Breast epithelium (tissue), 4 donors: ENCODE measurements at regions of chr10 and their contacts with region 1.

Region 1: DNA sequence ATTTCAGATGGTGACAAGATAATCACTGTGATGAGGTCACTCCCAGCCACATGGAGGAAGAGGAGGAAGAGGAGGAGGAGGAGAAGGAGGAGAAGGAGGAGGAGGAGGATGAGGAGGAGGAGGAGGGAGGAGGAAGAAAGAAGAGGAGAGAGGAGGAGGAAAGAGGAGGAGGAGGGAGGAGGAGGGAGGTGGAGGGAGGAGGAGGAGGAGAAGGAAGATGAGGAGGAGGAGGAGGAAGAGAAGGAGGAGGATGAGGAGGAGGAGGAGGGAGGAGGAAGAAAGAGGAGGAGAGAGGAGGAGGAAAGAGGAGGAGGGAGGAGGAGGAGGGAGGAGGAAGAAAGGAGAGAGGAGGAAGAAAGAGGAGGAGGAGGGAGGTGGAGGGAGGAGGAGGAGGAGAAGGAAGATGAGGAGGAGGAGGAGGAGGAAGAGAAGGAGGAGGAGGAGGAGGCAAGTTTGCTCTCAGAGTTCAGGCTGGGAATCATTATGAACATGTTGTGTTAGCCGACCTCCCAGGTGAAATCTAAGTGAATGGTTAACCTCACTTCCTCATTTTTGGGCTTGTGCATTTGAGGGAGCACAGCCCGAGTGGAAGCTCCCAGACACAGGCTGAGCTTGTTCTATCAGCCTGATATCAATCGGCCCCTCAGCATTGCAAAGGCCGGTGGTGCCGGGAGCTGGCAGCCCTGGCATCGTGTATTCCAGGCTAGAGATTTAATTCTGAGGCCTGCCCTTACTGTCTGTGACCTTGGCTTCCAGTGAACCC is 236.2 kb upstream of the PITRM1 start:
- DNase-seq: no peak
- H3K4me3 ChIP-seq: no peak overlapping the region
- H3K27ac ChIP-seq: no peak overlapping the region
- H3K4me1 ChIP-seq: no peaks in the 10 kb centered on the region
- H3K27me3 ChIP-seq: no peaks in the 10 kb centered on the region
- CTCF ChIP-seq: no peak
- POLR2A ChIP-seq: no peak

Region 2: DNA sequence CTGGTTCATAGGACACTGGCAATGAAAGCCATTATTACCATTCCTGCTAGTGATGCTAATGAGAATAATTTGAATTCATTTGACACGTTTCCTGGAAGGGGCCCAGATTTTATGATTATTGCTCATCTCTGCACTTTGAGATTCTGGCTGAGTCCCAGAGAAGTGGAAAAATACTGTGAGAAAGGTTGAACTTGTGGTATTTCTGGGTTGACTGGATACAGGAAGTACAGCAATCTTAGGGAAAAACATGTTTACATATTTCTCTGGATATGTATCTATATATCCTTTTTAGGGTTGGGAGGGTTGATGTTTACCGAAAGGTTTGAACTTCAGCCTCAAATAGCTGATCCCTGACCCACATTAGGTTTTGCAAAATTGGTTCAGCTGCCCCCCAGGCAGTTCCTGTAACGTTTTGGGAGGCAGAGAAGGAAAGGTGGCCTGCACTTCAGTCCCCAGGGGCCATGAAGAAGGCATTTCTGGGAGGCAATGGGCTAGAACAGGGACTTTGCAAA is 17.5 kb after region 1 on chr10:
- intact Hi-C with region 1: no loop called
- DNase-seq: no peak
- H3K4me3 ChIP-seq: no peak overlapping the region
- H3K27ac ChIP-seq: peak overlapping the region; percentile 44 to 85
- H3K4me1 ChIP-seq: peaks cover 0 to 5% of the 10 kb centered on the region in 2 donors
- H3K27me3 ChIP-seq: no peaks in the 10 kb centered on the region
- CTCF ChIP-seq: no peak
- POLR2A ChIP-seq: no peak

Region 3: DNA sequence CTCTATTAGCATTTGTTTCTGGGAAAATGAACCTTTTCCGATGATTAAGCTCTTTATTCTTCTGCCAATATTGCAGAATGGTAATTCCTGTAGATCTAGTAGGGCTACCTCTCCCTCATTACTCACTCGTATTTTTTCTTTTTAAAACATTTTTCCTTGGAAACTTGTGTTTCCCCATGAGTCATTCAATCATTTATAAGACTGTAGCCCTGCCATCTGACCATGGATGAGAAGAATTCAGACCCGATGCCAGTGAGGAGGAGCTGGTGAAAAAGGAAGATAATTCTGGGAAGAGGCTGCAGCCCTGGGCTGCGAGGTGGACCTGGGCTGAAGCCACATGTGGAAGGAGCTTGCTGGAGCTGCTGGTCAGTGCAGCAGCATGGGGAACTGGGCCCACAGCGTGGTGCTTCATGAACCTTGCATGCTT is 133.4 kb after region 1 on chr10:
- intact Hi-C with region 1: no loop called
- DNase-seq: no peak
- H3K4me3 ChIP-seq: no peak overlapping the region
- H3K27ac ChIP-seq: peak overlapping the region in 1 of 2 donors; percentile 55
- H3K4me1 ChIP-seq: no peaks in the 10 kb centered on the region
- H3K27me3 ChIP-seq: no peaks in the 10 kb centered on the region
- CTCF ChIP-seq: no peak
- POLR2A ChIP-seq: no peak

Region 4: DNA sequence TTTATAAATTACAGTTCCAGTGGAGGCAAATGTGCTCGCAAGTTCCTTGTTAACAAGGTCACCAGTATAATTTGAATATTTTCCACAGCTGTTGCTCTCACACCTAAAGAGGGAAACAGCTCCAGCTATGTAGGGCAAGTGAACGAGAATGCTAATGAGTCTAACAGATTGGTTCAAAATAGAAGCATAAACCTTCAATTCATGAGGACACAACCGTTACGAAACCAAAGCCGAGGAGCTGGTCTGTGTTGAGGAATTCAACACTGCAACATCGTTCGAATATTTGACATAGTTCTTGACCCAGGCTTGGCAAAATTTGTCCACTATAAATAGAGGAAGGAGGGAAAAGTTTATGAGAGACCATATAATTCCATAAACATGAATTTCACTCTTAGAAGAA is 215.0 kb after region 1 on chr10:
- intact Hi-C with region 1: loop called (anchors 5 kb)
- DNase-seq: peak in 1 of 2 donors; percentile 44
- H3K4me3 ChIP-seq: no peak overlapping the region
- H3K27ac ChIP-seq: no peak overlapping the region
- H3K4me1 ChIP-seq: peaks cover 0 to 4% of the 10 kb centered on the region in 2 donors
- H3K27me3 ChIP-seq: no peaks in the 10 kb centered on the region
- CTCF ChIP-seq: no peak
- POLR2A ChIP-seq: no peak

Region 5: DNA sequence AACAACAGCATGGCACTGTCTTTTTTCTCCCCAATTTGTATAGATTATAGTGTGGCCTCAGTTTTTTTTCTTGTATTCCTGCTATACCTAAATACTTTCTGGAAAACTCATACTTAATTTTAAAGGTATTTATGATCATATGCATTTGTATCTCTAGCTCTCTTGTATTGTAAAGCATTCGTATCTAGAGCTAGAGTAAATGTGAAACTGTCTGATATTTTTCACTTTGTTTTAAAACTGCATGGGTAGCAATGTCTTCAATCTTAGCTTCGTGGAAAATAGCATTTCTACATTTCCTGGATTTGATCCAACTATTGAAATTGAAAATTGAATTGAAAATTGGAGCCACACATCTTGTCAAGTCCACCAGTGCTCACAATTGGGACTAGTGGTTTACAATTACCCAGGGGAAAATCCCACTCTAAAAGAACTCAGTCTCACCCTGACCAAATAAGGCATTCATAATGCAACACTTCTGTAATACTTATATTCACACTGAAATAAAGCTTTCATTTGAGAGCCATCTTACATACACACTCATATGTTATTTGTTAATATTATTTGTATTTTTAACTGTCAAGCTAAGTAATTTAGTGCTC is 427.5 kb after region 1 on chr10:
- intact Hi-C with region 1: no loop called
- DNase-seq: no peak
- H3K4me3 ChIP-seq: no peak overlapping the region
- H3K27ac ChIP-seq: no peak overlapping the region
- H3K4me1 ChIP-seq: no peaks in the 10 kb centered on the region
- H3K27me3 ChIP-seq: no peaks in the 10 kb centered on the region
- CTCF ChIP-seq: no peak
- POLR2A ChIP-seq: no peak